ENCODE measurements at regions of chr15 and their contacts with region 1.

Region 1: GRCh38 chr15:34056936-34057335 is 17.9 kb upstream of the AVEN start:
- DNase-seq: no peak
- ATAC-seq: no peak
- H3K4me3 ChIP-seq: no peak overlapping the region
- H3K27ac ChIP-seq: no peak overlapping the region
- H3K4me1 ChIP-seq: no peaks in the 10 kb centered on the region
- H3K27me3 ChIP-seq: no peaks in the 10 kb centered on the region
- CTCF ChIP-seq: no peak

Region 2: DNA sequence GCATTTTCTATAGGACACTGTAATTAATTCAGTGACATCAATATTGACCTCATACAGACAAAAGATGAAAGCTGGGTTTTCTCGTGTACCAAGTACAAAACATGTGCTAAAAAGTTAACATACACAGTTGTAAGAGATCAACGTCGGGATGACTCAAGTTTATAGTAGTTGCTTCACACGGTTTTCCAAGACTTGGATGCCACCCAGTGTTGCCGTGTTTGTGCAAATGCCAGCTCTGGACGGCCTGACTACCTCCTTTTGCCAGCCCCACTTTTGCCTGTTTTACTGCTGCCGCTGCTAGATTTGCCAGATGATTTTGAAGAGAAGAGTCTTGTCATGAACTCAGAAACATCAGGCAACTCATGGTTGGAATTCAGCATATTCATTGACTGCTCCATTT is 27.1 kb after region 1 on chr15:
- CTCF ChIA-PET with region 1: no interaction called
- POLR2A ChIA-PET with region 1: no interaction called
- intact Hi-C with region 1: no loop called
- DNase-seq: peak; percentile 58
- ATAC-seq: peak; percentile 95
- H3K4me3 ChIP-seq: no peak overlapping the region
- H3K27ac ChIP-seq: no peak overlapping the region
- H3K4me1 ChIP-seq: no peaks in the 10 kb centered on the region
- H3K27me3 ChIP-seq: no peaks in the 10 kb centered on the region
- CTCF ChIP-seq: no peak

Region 3: DNA sequence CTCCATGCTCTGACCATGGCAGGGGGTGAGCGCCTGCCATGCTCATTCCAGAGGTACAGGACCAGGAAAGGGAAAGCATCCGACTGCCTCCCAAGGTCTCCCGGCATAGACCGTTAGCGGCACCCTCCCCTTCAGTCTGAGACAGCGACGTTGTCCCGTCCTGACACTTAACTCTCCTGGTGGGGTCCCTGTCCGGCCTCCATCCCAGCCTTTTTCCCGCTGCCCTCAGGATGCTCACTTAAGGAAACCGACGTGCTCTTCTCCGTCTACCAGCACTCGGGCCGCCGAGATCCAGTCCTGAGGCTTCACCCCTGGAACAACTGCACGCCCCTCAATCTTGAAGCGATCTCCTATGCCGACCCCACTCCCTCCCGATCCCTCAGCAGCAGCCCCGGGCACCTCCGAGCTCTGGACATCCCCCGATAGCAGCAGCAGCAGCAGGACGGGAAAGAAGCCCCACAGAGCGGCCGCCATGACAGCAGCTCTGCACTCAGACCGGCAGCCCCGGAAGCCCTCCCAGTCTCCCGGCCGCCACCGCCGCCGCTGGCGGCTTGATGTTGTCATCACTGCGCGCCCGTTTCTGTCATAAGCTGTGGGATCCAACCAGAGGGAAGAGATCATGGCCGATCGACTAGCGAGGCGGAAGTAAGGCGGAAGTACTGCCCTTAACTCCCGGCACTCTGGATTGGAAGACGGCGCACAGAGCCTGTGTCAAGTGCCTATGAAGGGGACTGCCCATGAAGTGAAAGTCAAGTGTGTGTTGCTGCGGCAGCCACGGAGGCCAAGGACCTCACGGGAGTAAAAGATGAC is 44.6 kb after region 1 on chr15 and contains the starts of genes EMC7 and PGBD4:
- CTCF ChIA-PET with region 1: no interaction called
- POLR2A ChIA-PET with region 1: no interaction called
- intact Hi-C with region 1: loop called (anchors 2 kb)
- DNase-seq: peak; percentile 99
- ATAC-seq: peak; percentile 99
- H3K4me3 ChIP-seq: peak within 1 kb of the TSS; percentile 76
- H3K27ac ChIP-seq: peak within 1 kb of the TSS; percentile 56
- H3K4me1 ChIP-seq: peaks cover 10% of the 10 kb centered on the region; the same call in 1 of the 2 replicates
- H3K27me3 ChIP-seq: no peaks in the 10 kb centered on the region
- CTCF ChIP-seq: no peak
- total RNA-seq, gene EMC7: 50.3 and 66.0 TPM in 2 replicates
- total RNA-seq, gene PGBD4: 1.2 and 2.6 TPM in 2 replicates

Region 4: GRCh38 chr15:34587717-34588674 is 531.1 kb after region 1 on chr15:
- CTCF ChIA-PET with region 1: no interaction called
- POLR2A ChIA-PET with region 1: no interaction called
- intact Hi-C with region 1: loop called (anchors 1 kb)
- DNase-seq: peak; percentile 80
- ATAC-seq: peak; percentile 64
- H3K4me3 ChIP-seq: peak overlapping the region; percentile 58
- H3K27ac ChIP-seq: no peak overlapping the region
- H3K4me1 ChIP-seq: peaks cover 6% of the 10 kb centered on the region; the same call in 1 of the 2 replicates
- H3K27me3 ChIP-seq: no peaks in the 10 kb centered on the region
- CTCF ChIP-seq: peak; percentile 91